Calu3 (cell line): ENCODE measurements at regions of chr20 and their contacts with region 1.

Region 1: DNA sequence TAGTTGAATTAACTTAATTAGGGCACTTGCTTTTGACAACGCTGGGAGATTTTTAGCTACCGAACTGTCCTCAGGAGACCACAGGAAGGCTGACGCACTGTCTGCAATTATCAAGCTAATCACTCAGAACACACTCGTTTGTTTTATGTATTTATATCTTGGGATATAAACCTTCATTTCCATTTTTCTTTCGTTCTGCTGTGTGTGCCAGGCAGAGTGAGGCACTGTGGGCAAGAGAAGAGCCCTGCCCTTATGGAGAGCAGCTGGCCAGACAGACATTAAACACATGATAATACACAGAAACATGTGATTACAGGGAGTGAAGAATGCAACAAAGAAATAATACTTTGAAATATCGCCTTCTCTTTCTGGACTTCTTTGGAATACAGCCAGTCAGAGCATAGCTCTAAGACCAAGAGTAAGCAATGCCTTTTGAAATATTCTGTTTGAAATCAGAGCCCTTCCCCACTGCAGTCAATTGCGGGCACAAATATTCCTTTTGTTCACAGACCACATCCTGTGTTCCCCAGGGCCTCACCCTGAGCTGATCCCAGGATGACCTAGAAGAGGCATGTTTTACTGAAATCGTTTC is 96.8 kb downstream of the ANKRD60 start:
- DNase-seq: peak; percentile 86
- H3K4me3 Mint-ChIP-seq: peak overlapping the region; percentile 63
- H3K27ac Mint-ChIP-seq: peak overlapping the region; percentile 99
- H3K4me1 Mint-ChIP-seq: peaks cover 89% of the 10 kb centered on the region
- H3K27me3 Mint-ChIP-seq: no peaks in the 10 kb centered on the region
- CTCF ChIP-seq: no peak

Region 2: GRCh38 chr20:57698117-57698866 is 433.4 kb before region 1 on chr20:
- CTCF ChIA-PET with region 1: interaction called, 3 read pairs
- intact Hi-C with region 1: loop called (anchors 5 kb)
- DNase-seq: peak; percentile 94
- H3K4me3 Mint-ChIP-seq: peak overlapping the region; percentile 88
- H3K27ac Mint-ChIP-seq: peak overlapping the region; percentile 97
- H3K4me1 Mint-ChIP-seq: peaks cover 92% of the 10 kb centered on the region
- H3K27me3 Mint-ChIP-seq: no peaks in the 10 kb centered on the region
- CTCF ChIP-seq: no peak

Region 3: GRCh38 chr20:58112017-58112781 is 19.4 kb before region 1 on chr20:
- CTCF ChIA-PET with region 1: interaction called, 14 read pairs
- intact Hi-C with region 1: loop called (anchors 2 kb)
- DNase-seq: peak; percentile 66
- H3K4me3 Mint-ChIP-seq: no peak overlapping the region
- H3K27ac Mint-ChIP-seq: peak overlapping the region; percentile 29
- H3K4me1 Mint-ChIP-seq: peaks cover 57% of the 10 kb centered on the region
- H3K27me3 Mint-ChIP-seq: no peaks in the 10 kb centered on the region
- CTCF ChIP-seq: no peak

Region 4: DNA sequence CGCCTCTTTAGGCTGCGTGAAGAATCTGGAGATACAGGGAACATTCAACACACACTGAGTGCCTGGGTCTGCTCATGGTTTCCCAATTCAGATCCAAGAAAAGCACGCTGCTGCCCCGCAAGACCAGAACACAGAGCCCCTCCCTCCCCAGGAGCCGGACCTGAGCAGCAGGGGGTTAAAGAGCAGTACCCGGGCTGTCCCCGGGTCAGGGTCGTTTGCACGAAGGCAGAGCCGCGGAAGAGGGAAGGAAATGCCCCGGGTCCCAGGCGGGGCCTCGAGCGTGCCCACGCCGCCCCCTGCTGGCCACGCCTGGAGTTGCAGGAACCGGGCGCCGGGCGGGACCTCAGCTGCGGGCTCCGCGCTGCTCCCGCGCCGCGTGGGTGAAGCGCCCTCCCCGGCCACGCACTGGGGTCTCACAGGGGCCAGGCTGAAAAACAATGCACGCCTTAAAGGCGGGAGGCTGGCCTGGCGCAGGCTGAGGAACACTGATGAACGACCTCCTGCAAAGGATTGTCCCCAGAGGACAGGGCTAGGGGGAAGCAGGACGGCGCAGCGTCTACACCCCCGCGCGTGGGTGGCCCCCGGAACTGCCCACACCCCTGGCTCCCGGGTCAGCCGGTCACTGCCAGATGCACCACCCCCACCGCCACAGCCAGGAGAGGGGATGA is 47.9 kb after region 1 on chr20:
- CTCF ChIA-PET with region 1: interaction called, 9 read pairs
- intact Hi-C with region 1: loop called (anchors 2 kb)
- DNase-seq: peak; percentile 92
- H3K4me3 Mint-ChIP-seq: peak overlapping the region; percentile 68
- H3K27ac Mint-ChIP-seq: peak overlapping the region; percentile 91
- H3K4me1 Mint-ChIP-seq: peaks cover 35% of the 10 kb centered on the region
- H3K27me3 Mint-ChIP-seq: no peaks in the 10 kb centered on the region
- CTCF ChIP-seq: peak; percentile 100